MCF 10A (cell line): ENCODE measurements at regions of chr2 and their contacts with region 1.

Region 1: GRCh38 chr2:222424729-222425671 is 657 bp downstream of the SGPP2 start:
- DNase-seq: peak; percentile 21
- H3K4me3 Mint-ChIP-seq: peak overlapping the region; percentile 82
- H3K27ac Mint-ChIP-seq: no peak overlapping the region
- H3K4me1 Mint-ChIP-seq: peaks cover 33% of the 10 kb centered on the region
- H3K27me3 Mint-ChIP-seq: no peaks in the 10 kb centered on the region
- CTCF ChIP-seq: no peak

Region 2: GRCh38 chr2:222451224-222451674 is 26.2 kb after region 1 on chr2:
- CTCF ChIA-PET with region 1: interaction called, 4 read pairs
- POLR2A ChIA-PET with region 1: interaction called, 61 read pairs
- intact Hi-C with region 1: no loop called
- DNase-seq: no peak
- H3K4me3 Mint-ChIP-seq: peak overlapping the region; percentile 30
- H3K27ac Mint-ChIP-seq: peak overlapping the region; percentile 61
- H3K4me1 Mint-ChIP-seq: peaks cover 62% of the 10 kb centered on the region
- H3K27me3 Mint-ChIP-seq: no peaks in the 10 kb centered on the region
- CTCF ChIP-seq: no peak

Region 3: GRCh38 chr2:222548992-222549391 is 124.0 kb after region 1 on chr2:
- CTCF ChIA-PET with region 1: no interaction called
- POLR2A ChIA-PET with region 1: no interaction called
- intact Hi-C with region 1: no loop called
- DNase-seq: no peak
- H3K4me3 Mint-ChIP-seq: no peak overlapping the region
- H3K27ac Mint-ChIP-seq: no peak overlapping the region
- H3K4me1 Mint-ChIP-seq: peaks cover 9% of the 10 kb centered on the region
- H3K27me3 Mint-ChIP-seq: no peaks in the 10 kb centered on the region
- CTCF ChIP-seq: no peak

Region 4: DNA sequence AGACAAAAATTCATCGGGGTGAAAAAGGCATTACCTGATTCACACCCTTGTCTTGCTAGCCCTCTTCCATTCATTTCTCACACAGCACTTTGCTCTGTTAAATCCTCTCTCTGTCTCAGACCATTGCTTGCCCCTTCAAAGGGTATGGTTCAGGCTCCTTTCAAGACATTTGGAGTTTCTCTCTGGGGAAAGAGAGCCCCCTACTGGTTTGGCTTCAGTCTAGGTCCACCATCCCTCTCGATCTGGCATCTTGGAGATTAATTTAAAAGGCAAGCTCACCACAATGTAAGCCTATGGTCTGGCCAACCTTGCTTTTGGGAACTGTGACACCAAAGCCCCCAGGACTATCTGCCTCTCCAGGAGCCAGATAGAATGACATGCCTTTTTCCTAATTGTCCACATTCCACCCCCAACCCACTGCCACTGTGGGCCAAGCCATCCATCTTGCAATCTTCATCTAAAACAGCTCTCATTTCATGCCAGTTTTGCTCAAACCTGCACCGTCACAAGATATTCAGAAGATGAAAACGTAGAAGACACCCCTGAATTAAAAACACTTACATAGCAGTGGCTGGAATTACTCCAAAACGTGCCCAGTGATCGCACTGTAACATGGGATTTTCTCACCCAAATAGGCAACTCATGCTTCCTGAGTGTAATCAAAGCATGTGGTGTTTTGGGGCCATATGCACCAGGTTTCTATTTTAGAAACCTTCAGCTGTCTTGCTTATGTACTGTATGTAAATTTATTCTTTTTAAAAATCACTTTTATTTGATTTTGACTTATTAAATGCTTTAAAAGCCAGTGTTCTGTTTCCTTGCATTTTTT is 137.0 kb after region 1 on chr2:
- CTCF ChIA-PET with region 1: no interaction called
- POLR2A ChIA-PET with region 1: no interaction called
- intact Hi-C with region 1: loop called (anchors 5 kb)
- DNase-seq: peak; percentile 78
- H3K4me3 Mint-ChIP-seq: no peak overlapping the region
- H3K27ac Mint-ChIP-seq: no peak overlapping the region
- H3K4me1 Mint-ChIP-seq: peaks cover 7% of the 10 kb centered on the region
- H3K27me3 Mint-ChIP-seq: no peaks in the 10 kb centered on the region
- CTCF ChIP-seq: peak; percentile 72